ENCODE measurements at regions of chr18 and their contacts with region 1.

Region 1: GRCh38 chr18:57434536-57435494 is at the start of gene ONECUT2:
- DNase-seq: peak; percentile 99
- H3K4me3 ChIP-seq: peak within 1 kb of the TSS; percentile 69 to 73
- H3K27ac ChIP-seq: peak within 1 kb of the TSS in 1 of 2 experiments; percentile 53; a peak in 2 of 4 replicates
- H3K4me1 ChIP-seq: peaks cover 0 to 24% of the 10 kb centered on the region in 2 experiments; a peak in 1 of 4 replicates
- H3K27me3 ChIP-seq: peaks cover 39% of the 10 kb centered on the region; the same call in 1 of the 2 replicates
- CTCF ChIP-seq: no peak
- EP300 ChIP-seq: no peak
- RAD21 ChIP-seq: no peak
- polyA plus RNA-seq, gene ONECUT2: 0.10 and 0.16 TPM in 2 replicates

Region 2: GRCh38 chr18:56748698-56749268 is 686.0 kb before region 1 on chr18:
- CTCF ChIA-PET with region 1: interaction called, 18 read pairs
- POLR2A ChIA-PET with region 1: no interaction called
- DNase-seq: peak; percentile 43
- H3K4me3 ChIP-seq: no peak overlapping the region
- H3K27ac ChIP-seq: no peak overlapping the region
- H3K4me1 ChIP-seq: no peaks in the 10 kb centered on the region
- H3K27me3 ChIP-seq: no peaks in the 10 kb centered on the region
- CTCF ChIP-seq: peak; percentile 81
- EP300 ChIP-seq: no peak
- RAD21 ChIP-seq: peak; percentile 90

Region 3: DNA sequence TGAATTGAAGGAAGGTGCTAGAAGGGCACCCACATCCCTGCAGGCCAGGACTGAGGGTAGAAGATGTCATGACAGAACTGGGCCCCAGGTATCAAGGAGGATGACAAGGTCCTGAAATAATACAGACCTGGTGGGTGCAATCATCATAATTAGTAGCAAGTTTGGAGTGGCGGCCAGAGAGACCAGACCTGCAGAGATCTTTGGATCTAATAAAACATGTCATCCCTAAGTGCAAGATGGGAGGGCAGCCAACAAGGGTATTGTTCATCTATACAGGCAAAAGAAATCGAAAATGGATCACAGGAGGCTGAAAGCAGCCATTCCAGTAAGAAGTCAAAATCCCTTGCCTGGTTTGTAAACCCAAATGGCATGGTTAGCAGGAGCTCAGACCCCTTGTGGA is 399.2 kb before region 1 on chr18:
- CTCF ChIA-PET with region 1: interaction called, 14 read pairs
- POLR2A ChIA-PET with region 1: no interaction called
- DNase-seq: peak; percentile 54
- H3K4me3 ChIP-seq: no peak overlapping the region
- H3K27ac ChIP-seq: peak overlapping the region in 1 of 2 experiments; percentile 58; a peak in 2 of 4 replicates
- H3K4me1 ChIP-seq: peaks cover 0 to 16% of the 10 kb centered on the region in 2 experiments; a peak in 1 of 4 replicates
- H3K27me3 ChIP-seq: no peaks in the 10 kb centered on the region
- CTCF ChIP-seq: no peak
- EP300 ChIP-seq: peak in 1 of 2 experiments; percentile 65; a peak in 2 of 4 replicates
- RAD21 ChIP-seq: no peak

Region 4: GRCh38 chr18:57353940-57354461 is 80.8 kb before region 1 on chr18:
- CTCF ChIA-PET with region 1: interaction called, 8 read pairs
- POLR2A ChIA-PET with region 1: interaction called, 43 read pairs
- DNase-seq: peak; percentile 77
- H3K4me3 ChIP-seq: peak overlapping the region; percentile 35 to 37; a peak in 3 of 4 replicates
- H3K27ac ChIP-seq: peak overlapping the region in 1 of 2 experiments; percentile 96; a peak in 2 of 4 replicates
- H3K4me1 ChIP-seq: peaks cover 0 to 5% of the 10 kb centered on the region in 2 experiments; a peak in 2 of 4 replicates
- H3K27me3 ChIP-seq: peaks cover 15% of the 10 kb centered on the region; the same call in 1 of the 2 replicates
- CTCF ChIP-seq: no peak
- EP300 ChIP-seq: no peak
- RAD21 ChIP-seq: no peak

Region 5: DNA sequence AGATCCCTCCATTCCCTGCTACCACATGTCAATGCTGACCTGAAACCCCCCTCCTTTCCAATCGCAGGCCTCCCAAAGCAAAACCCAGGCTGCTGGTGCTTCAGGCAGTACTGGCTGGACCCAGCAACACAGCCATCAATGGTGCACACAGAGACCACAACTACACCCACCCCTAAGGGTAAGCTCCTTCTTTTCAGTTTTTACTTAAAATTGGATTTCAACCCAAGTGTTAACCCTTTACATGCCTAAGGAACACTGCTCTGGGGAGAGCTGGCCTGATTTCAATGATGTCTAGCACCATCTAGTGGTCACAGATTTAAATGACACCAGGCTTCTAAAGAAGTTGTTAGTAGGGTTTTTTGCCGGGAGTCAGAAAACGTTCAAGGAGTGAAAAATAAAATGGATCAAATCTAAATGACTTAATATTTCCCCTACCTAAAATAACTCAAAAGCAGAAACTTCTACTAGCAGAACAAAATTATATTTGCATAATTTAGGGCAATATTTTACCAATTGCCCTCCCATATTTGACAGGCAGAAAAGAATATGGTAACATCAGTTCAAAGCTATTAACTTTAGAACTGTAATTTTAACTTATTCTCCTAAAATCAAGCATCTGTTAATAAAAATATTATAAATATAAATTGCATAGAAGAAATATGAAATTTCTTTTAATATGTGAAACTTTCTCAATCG is 127.1 kb after region 1 on chr18:
- CTCF ChIA-PET with region 1: interaction called, 41 read pairs
- POLR2A ChIA-PET with region 1: no interaction called
- DNase-seq: peak; percentile 68
- H3K4me3 ChIP-seq: peak overlapping the region in 1 of 2 experiments; percentile 28; a peak in 1 of 4 replicates
- H3K27ac ChIP-seq: no peak overlapping the region
- H3K4me1 ChIP-seq: peaks cover 0 to 3% of the 10 kb centered on the region in 2 experiments; a peak in 1 of 4 replicates
- H3K27me3 ChIP-seq: no peaks in the 10 kb centered on the region
- CTCF ChIP-seq: peak; percentile 94
- EP300 ChIP-seq: no peak
- RAD21 ChIP-seq: peak; percentile 80

Measured in SK-N-SH (cell line).